Activated B cell treated with CpG ODN at 0.5 μM for 24 hours (primary cell): ENCODE measurements at regions of chr3 and their contacts with region 1.

Region 1: GRCh38 chr3:197835509-197835908 is 44.5 kb downstream of the LRCH3 start:
- DNase-seq: no peak
- ATAC-seq: peak; percentile 83
- H3K4me3 Mint-ChIP-seq: no peak overlapping the region
- H3K27ac Mint-ChIP-seq: peak overlapping the region; percentile 71
- H3K4me1 Mint-ChIP-seq: peaks cover 14% of the 10 kb centered on the region
- H3K27me3 Mint-ChIP-seq: no peaks in the 10 kb centered on the region
- CTCF ChIP-seq: no peak

Region 2: GRCh38 chr3:197782230-197782629 is 53.3 kb before region 1 on chr3:
- CTCF ChIA-PET with region 1: no interaction called
- POLR2A ChIA-PET with region 1: no interaction called
- intact Hi-C with region 1: loop called (anchors 5 kb)
- DNase-seq: no peak
- ATAC-seq: peak; percentile 91
- H3K4me3 Mint-ChIP-seq: peak overlapping the region; percentile 60
- H3K27ac Mint-ChIP-seq: peak overlapping the region; percentile 80
- H3K4me1 Mint-ChIP-seq: peaks cover 41% of the 10 kb centered on the region
- H3K27me3 Mint-ChIP-seq: no peaks in the 10 kb centered on the region
- CTCF ChIP-seq: no peak

Region 3: GRCh38 chr3:197820550-197821335 is 14.8 kb before region 1 on chr3:
- CTCF ChIA-PET with region 1: no interaction called
- POLR2A ChIA-PET with region 1: no interaction called
- intact Hi-C with region 1: loop called (anchors 2 kb)
- DNase-seq: no peak
- ATAC-seq: no peak
- H3K4me3 Mint-ChIP-seq: no peak overlapping the region
- H3K27ac Mint-ChIP-seq: peak overlapping the region; percentile 30
- H3K4me1 Mint-ChIP-seq: no peaks in the 10 kb centered on the region
- H3K27me3 Mint-ChIP-seq: no peaks in the 10 kb centered on the region
- CTCF ChIP-seq: no peak